KBM-7 (cell line): ENCODE measurements at regions of chr16 and their contacts with region 1.

Region 1: GRCh38 chr16:87661561-87661960 is 59.3 kb downstream of the JPH3 start:
- DNase-seq: peak; percentile 97

Region 2: GRCh38 chr16:87190288-87191230 is 471.0 kb before region 1 on chr16:
- in situ Hi-C with region 1: no loop called
- DNase-seq: no peak

Region 3: DNA sequence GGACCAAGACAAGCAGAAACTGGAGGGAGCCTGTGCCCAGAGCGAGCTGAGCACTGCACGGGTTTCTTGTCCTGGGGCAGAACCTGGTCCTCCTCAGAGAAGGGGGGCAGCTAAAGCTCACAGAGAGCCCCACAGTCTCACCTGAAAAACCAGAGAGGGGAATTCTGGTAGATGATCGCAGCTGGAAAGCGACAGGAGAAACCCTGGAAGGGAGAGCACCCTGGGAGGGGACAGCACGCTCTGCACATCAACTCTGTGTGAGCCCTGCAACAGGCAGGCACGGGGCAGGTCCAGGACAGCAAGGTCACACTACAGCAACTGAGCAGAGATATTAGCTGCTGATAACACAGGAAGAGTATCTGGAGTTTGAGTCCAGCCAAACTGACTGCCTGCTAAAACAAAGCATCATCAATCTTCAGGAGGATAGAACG is 187.0 kb before region 1 on chr16:
- in situ Hi-C with region 1: no loop called
- DNase-seq: no peak

Region 4: GRCh38 chr16:87608400-87608985 is 53.1 kb before region 1 on chr16:
- in situ Hi-C with region 1: loop called (anchors 10 kb)
- DNase-seq: peak; percentile 76